H1 (cell line): ENCODE measurements at regions of chr6 and their contacts with region 1.

Region 1: DNA sequence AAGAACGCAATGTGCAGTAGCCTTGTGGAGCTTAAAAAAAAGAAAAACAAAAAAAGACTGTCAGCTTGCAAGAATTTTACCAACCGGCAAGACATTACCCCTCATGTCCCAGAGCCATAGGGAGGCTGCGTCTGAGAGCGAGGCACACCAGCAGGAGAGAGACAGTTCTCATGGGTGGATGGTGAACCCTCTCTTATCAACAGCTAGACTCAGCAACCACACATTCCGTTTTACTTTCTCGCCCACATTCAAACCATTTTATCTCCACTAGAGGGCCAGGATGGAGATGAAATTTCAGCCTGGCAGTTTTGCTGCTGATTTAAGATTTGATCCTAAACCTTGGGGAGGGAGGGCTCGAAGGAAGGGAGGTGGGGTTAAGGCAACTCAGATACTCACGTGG is 247.0 kb downstream of the ATXN1 start:
- DNase-seq: no peak
- H3K4me3 ChIP-seq: no peak overlapping the region
- H3K27ac ChIP-seq: no peak overlapping the region
- H3K4me1 ChIP-seq: peaks cover 0 to 3% (median 0%) of the 10 kb centered on the region in 4 experiments; a peak in 2 of 7 replicates
- H3K27me3 ChIP-seq: no peaks in the 10 kb centered on the region
- CTCF ChIP-seq: peak in 2 of 3 experiments; percentile 57 to 73; a peak in 3 of 4 replicates
- EP300 ChIP-seq: no peak
- POLR2A ChIP-seq: no peak
- RAD21 ChIP-seq: peak; percentile 57

Region 2: GRCh38 chr6:16409531-16410441 is 104.5 kb before region 1 on chr6:
- CTCF ChIA-PET with region 1: interaction called, 10 read pairs
- POLR2A ChIA-PET with region 1: no interaction called
- DNase-seq: peak; percentile 21 to 75
- H3K4me3 ChIP-seq: no peak overlapping the region
- H3K27ac ChIP-seq: no peak overlapping the region
- H3K4me1 ChIP-seq: peaks cover 0 to 2% (median 0%) of the 10 kb centered on the region in 4 experiments; a peak in 2 of 7 replicates
- H3K27me3 ChIP-seq: no peaks in the 10 kb centered on the region
- CTCF ChIP-seq: peak; percentile 80 to 89 (median 84)
- EP300 ChIP-seq: no peak
- POLR2A ChIP-seq: no peak
- RAD21 ChIP-seq: peak; percentile 65 to 74

Region 3: GRCh38 chr6:16494793-16495192 is 19.5 kb before region 1 on chr6:
- CTCF ChIA-PET with region 1: interaction called, 20 read pairs
- POLR2A ChIA-PET with region 1: no interaction called
- DNase-seq: no peak
- H3K4me3 ChIP-seq: no peak overlapping the region
- H3K27ac ChIP-seq: no peak overlapping the region
- H3K4me1 ChIP-seq: peaks cover 4 to 21% (median 9%) of the 10 kb centered on the region in 4 experiments
- H3K27me3 ChIP-seq: no peaks in the 10 kb centered on the region
- CTCF ChIP-seq: no peak
- EP300 ChIP-seq: no peak
- POLR2A ChIP-seq: no peak
- RAD21 ChIP-seq: no peak

Region 4: DNA sequence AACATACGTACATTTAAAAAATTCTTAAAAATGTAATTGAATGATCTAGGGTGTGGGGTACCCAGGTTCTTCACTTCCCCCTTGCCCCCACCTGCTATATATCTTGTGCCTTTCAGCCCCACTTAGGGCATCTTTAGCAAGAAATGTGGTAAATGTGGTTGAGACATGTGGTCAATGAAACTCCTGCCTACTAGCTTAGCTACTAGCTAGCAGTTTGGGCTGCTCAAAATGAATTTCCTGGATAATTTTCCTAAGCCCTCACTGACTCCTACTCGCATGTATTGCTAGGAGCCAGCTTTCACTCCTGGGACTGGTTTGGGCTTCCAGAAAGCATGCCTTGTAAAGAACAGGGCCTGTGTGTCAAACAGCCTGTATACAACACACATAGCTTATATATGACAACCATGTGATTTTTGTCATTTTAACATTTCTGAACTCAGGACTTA is 10.3 kb before region 1 on chr6:
- CTCF ChIA-PET with region 1: interaction called, 17 read pairs
- POLR2A ChIA-PET with region 1: no interaction called
- DNase-seq: no peak
- H3K4me3 ChIP-seq: no peak overlapping the region
- H3K27ac ChIP-seq: no peak overlapping the region
- H3K4me1 ChIP-seq: no peaks in the 10 kb centered on the region
- H3K27me3 ChIP-seq: no peaks in the 10 kb centered on the region
- CTCF ChIP-seq: no peak
- EP300 ChIP-seq: no peak
- POLR2A ChIP-seq: no peak
- RAD21 ChIP-seq: no peak

Region 5: GRCh38 chr6:16533721-16534136 is 19.5 kb after region 1 on chr6:
- CTCF ChIA-PET with region 1: interaction called, 11 read pairs
- POLR2A ChIA-PET with region 1: interaction called, 3 read pairs
- DNase-seq: no peak
- H3K4me3 ChIP-seq: no peak overlapping the region
- H3K27ac ChIP-seq: no peak overlapping the region
- H3K4me1 ChIP-seq: no peaks in the 10 kb centered on the region
- H3K27me3 ChIP-seq: no peaks in the 10 kb centered on the region
- CTCF ChIP-seq: no peak
- EP300 ChIP-seq: no peak
- POLR2A ChIP-seq: no peak
- RAD21 ChIP-seq: no peak

Region 6: GRCh38 chr6:16761471-16762267 is 247.4 kb after region 1 on chr6:
- CTCF ChIA-PET with region 1: interaction called, 37 read pairs
- POLR2A ChIA-PET with region 1: no interaction called
- DNase-seq: peak; percentile 70 to 88
- H3K4me3 ChIP-seq: peak overlapping the region; percentile 63 to 84 (median 66)
- H3K27ac ChIP-seq: no peak overlapping the region
- H3K4me1 ChIP-seq: peaks cover 8 to 22% (median 10%) of the 10 kb centered on the region in 4 experiments; a peak in 6 of 7 replicates
- H3K27me3 ChIP-seq: peaks cover 1 to 24% (median 12%) of the 10 kb centered on the region in 4 experiments; a peak in 6 of 7 replicates
- CTCF ChIP-seq: peak in 1 of 3 experiments; percentile 18; a peak in 1 of 4 replicates
- EP300 ChIP-seq: no peak
- POLR2A ChIP-seq: peak in 1 of 2 experiments; percentile 13; a peak in 1 of 3 replicates
- RAD21 ChIP-seq: peak in 1 of 2 experiments; percentile 40; a peak in 2 of 4 replicates

Region 7: GRCh38 chr6:16770701-16771569 is 256.7 kb after region 1 on chr6:
- CTCF ChIA-PET with region 1: interaction called, 15 read pairs
- POLR2A ChIA-PET with region 1: no interaction called
- DNase-seq: peak; percentile 61 to 82
- H3K4me3 ChIP-seq: no peak overlapping the region
- H3K27ac ChIP-seq: no peak overlapping the region
- H3K4me1 ChIP-seq: peaks cover 0 to 3% (median 0%) of the 10 kb centered on the region in 4 experiments; a peak in 1 of 7 replicates
- H3K27me3 ChIP-seq: no peaks in the 10 kb centered on the region; a peak in 2 of 7 replicates
- CTCF ChIP-seq: peak; percentile 86 to 95 (median 94)
- EP300 ChIP-seq: no peak
- POLR2A ChIP-seq: no peak
- RAD21 ChIP-seq: peak; percentile 72 to 80